Activated T-helper 2 cell treated with anti-CD3 and anti-CD28 coated beads, Interferon-gamma antibody, Interleukin-2, Interleukin-4, amounts not matched to agents 10 μg/mL and 5 μg/mL and 100 μg/mL, durations not matched to agents 14 hours and 24 hours and 36 hours (primary cell): ENCODE measurements at regions of chr3 and their contacts with region 1.

Region 1: DNA sequence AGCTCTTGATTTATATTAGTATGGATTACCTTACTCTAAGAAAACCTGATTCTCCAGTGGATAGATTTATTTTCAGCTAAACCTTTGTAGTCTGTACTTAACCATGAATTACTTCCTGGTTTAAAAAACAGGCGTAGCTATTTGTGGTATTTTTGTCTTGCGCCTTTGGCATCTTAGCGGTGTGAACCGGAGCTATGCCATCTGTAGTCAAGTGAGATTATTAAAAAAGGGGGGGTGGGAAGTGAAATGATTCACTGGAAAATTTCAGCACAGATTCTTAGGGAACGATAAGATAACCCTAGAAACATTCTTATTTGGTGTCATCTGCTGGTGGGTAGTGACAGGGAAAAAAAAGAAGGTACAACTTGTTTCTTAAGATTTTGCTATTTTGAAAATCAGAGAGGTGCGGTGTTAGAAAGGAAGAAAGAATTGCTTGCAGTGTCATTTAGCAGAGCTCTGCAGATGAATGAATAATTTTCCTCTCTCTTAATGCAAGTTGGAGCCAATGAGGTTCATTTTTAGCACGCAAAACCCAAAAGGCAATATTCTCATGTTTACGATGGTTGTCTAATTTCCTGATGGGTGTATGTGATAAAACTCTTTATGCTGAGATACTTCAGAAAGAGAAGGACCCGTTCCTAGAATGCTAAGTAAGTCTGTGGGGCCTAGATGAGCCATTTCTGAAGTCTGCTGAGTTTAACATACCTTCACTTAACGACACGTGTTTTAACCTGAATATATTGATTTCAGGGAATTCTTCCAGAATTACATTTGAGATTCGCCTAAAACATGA is 44.0 kb downstream of the PSMD6 start:
- DNase-seq: no peak
- H3K4me3 Mint-ChIP-seq: peak overlapping the region; percentile 69
- H3K27ac Mint-ChIP-seq: peak overlapping the region; percentile 83
- H3K4me1 Mint-ChIP-seq: peaks cover 69% of the 10 kb centered on the region
- H3K27me3 Mint-ChIP-seq: no peaks in the 10 kb centered on the region

Region 2: GRCh38 chr3:62859203-62859791 is 1120.0 kb before region 1 on chr3:
- intact Hi-C with region 1: no loop called
- DNase-seq: no peak
- H3K4me3 Mint-ChIP-seq: no peak overlapping the region
- H3K27ac Mint-ChIP-seq: no peak overlapping the region
- H3K4me1 Mint-ChIP-seq: no peaks in the 10 kb centered on the region
- H3K27me3 Mint-ChIP-seq: no peaks in the 10 kb centered on the region

Region 3: DNA sequence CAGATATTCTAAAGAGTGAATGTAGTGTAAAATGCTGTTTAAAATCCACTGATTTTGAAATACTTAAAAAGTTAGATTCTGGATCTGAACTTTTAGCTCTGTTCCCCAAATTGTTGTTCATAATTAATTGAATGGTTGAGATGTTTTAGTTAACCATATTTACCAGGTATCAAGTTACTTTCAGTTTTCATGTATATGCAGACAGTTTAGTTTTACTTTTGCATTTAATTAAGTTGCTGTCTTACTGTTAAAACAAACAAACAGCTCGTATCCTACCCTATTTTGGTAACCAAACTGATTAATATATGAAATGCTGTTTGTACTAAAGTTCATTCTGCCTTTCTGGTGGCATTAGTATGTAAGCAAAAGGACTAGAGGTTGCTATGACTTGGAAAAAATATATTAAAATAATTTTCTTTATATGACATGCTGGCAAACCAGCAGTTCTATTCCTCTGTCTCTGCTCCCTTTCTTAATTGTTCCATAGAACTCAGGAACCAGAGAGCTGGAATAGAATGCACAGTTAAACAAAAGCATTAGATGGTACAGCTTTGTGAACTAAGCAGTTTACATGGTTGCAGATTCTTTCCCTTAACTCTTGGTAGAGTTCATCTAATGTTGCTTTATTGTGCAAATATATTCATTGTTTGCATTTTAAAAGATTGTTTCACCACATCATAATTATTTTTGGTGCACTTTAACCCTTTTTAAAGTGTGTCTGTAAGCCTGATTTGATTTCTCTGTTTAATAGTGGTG is 27.6 kb before region 1 on chr3:
- intact Hi-C with region 1: no loop called
- DNase-seq: no peak
- H3K4me3 Mint-ChIP-seq: peak overlapping the region; percentile 69
- H3K27ac Mint-ChIP-seq: peak overlapping the region; percentile 80
- H3K4me1 Mint-ChIP-seq: peaks cover 37% of the 10 kb centered on the region
- H3K27me3 Mint-ChIP-seq: no peaks in the 10 kb centered on the region

Region 4: GRCh38 chr3:63961891-63962290 is 17.4 kb before region 1 on chr3:
- intact Hi-C with region 1: loop called (anchors 2 kb)
- DNase-seq: no peak
- H3K4me3 Mint-ChIP-seq: no peak overlapping the region
- H3K27ac Mint-ChIP-seq: no peak overlapping the region
- H3K4me1 Mint-ChIP-seq: peaks cover 44% of the 10 kb centered on the region
- H3K27me3 Mint-ChIP-seq: no peaks in the 10 kb centered on the region

Region 5: GRCh38 chr3:63993653-63994079 is 14.4 kb after region 1 on chr3:
- intact Hi-C with region 1: loop called (anchors 2 kb)
- DNase-seq: peak; percentile 20
- H3K4me3 Mint-ChIP-seq: no peak overlapping the region
- H3K27ac Mint-ChIP-seq: no peak overlapping the region
- H3K4me1 Mint-ChIP-seq: peaks cover 8% of the 10 kb centered on the region
- H3K27me3 Mint-ChIP-seq: no peaks in the 10 kb centered on the region

Region 6: DNA sequence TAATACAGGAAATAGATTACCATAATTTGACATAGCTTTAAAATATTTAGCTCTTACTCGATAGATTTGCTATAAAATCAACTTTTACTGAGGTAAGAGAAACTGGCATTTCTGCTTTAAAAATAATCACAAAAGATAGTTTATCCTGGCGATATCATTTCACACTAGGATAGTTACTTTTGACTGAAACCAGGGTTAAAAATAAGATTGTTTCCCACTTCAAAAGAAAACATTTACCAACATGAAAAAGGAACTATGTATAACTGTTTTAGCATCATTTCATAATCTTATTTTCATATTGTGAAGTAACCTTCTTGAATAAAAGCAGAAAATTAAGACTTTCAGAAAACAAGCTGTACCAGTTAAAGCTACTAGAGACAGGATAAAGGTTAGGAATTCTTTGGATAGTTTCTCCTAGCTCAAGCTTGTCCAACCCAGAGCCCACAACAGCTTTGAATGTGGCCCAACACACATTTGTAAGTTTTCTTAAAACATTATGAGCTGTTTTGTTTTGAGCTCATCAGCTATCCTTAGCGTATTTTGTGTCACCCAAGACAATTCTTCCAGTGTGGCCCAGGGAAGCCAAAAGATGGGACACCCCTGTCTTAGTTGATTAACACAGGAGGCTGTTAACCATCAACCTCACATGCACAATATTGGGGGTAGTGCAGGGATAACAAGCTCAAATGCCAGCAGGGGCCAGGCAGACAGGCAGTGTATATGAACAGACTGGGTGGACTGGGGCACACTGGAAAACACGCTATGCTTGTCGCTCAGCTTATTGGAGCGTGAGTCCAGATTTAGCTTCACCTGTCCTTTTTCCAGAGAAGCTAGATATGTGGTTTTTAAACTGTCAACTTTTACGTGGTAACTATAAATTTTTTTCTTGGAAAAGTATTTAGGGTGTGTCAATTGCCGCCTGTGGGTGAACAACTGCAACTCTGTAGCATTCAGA is 29.0 kb after region 1 on chr3:
- intact Hi-C with region 1: no loop called
- DNase-seq: no peak
- H3K4me3 Mint-ChIP-seq: no peak overlapping the region
- H3K27ac Mint-ChIP-seq: no peak overlapping the region
- H3K4me1 Mint-ChIP-seq: peaks cover 13% of the 10 kb centered on the region
- H3K27me3 Mint-ChIP-seq: no peaks in the 10 kb centered on the region